Activated CD4-positive, alpha-beta T cell treated with anti-CD3 and anti-CD28 coated beads for 36 hours (primary cell): ENCODE measurements at regions of chr17 and their contacts with region 1.

Region 1: GRCh38 chr17:75632863-75633485 is at the start of gene SMIM5:
- DNase-seq: peak; percentile 92
- ATAC-seq: peak; percentile 93
- H3K4me3 Mint-ChIP-seq: no peak within 1 kb of the TSS
- H3K27ac Mint-ChIP-seq: no peak within 1 kb of the TSS
- H3K4me1 Mint-ChIP-seq: peaks cover 5% of the 10 kb centered on the region
- H3K27me3 Mint-ChIP-seq: no peaks in the 10 kb centered on the region
- total RNA-seq, gene SMIM5: 0.12 to 0.14 TPM

Region 2: DNA sequence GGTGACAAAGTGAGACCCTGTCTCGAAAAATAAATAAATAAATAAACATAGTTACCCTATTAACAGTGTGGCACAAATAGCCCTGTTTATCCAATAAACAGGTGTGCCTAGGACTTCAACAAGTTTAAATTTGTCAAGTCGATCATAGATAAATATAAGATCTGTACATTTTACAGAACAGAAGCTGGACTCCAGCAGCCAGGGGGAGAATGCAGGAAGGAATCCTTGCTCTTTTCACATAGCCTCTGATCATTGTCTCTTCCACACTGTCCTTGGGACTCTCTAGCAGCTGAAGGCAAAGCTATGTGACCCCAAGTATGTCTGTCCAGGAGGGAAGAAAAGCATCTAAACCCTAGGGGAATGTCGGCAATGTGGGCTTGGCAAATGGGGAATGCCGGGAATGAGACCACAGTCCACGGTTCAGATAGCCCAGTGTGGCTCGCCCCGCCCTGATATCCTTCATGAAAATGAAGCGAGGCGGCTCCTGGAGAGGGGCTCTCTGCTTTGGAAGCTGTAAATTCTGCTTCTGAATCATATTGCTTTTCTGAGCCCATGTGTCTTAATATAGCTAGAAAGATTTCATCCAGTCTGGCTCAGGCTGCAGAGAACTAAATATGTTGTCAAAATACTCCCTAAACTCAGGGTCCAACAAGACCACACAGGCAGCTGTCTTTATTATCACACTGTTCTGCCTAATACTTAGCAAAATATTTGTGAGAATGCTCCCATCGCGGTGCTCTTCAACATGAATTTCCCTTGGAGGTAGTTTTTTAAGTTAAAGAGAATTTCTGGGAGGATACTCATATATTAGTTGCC is 202.6 kb before region 1 on chr17:
- CTCF ChIA-PET with region 1: interaction called, 6 read pairs
- POLR2A ChIA-PET with region 1: no interaction called
- intact Hi-C with region 1: loop called in 1 of 2 experiments (anchors 1 kb)
- DNase-seq: no peak
- ATAC-seq: no peak
- H3K4me3 Mint-ChIP-seq: no peak overlapping the region
- H3K27ac Mint-ChIP-seq: no peak overlapping the region
- H3K4me1 Mint-ChIP-seq: peaks cover 16% of the 10 kb centered on the region
- H3K27me3 Mint-ChIP-seq: peaks cover 5% of the 10 kb centered on the region

Region 3: GRCh38 chr17:75601057-75602051 is 31.6 kb before region 1 on chr17:
- CTCF ChIA-PET with region 1: interaction called, 14 read pairs
- POLR2A ChIA-PET with region 1: no interaction called
- intact Hi-C with region 1: no loop called
- DNase-seq: peak; percentile 83
- ATAC-seq: peak; percentile 90
- H3K4me3 Mint-ChIP-seq: no peak overlapping the region
- H3K27ac Mint-ChIP-seq: no peak overlapping the region
- H3K4me1 Mint-ChIP-seq: no peaks in the 10 kb centered on the region
- H3K27me3 Mint-ChIP-seq: no peaks in the 10 kb centered on the region

Region 4: DNA sequence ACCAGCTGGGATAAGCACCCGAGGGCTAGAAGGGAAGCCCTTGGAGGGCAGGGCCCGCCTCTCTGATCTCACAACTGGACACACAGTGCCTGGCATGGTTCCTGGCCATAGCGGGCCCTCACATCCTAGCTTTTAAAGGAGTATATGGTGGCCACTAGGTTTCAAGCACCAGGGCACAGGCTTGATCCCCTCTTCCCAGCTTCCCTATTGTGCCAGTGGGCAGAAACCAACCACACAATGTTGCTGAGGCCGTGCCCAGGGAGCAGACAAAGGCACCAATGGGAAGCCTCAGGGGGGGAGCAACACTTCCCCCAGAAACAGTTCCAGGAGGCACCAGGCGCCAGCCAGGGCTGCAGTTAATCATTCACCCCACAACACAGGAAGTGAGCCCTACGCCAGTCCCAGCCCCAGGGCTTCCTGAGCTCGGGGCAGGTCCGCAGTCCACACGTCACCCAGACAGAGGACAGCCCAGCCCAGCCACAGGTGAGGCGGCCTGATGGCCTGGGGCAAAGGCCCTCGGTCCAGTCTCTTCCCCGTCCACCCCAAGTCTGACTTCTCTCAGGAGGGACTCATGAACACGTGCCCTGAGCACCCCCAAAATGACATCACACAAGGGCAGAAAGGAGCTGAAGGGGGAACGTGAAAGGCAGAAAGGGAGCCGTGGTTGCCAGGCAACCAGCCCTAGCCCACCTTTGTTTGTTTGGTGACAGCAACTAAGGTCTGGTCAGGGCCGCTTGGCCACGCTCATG is 13.1 kb after region 1 on chr17:
- CTCF ChIA-PET with region 1: interaction called, 45 read pairs
- POLR2A ChIA-PET with region 1: no interaction called
- intact Hi-C with region 1: no loop called
- DNase-seq: no peak
- ATAC-seq: no peak
- H3K4me3 Mint-ChIP-seq: no peak overlapping the region
- H3K27ac Mint-ChIP-seq: no peak overlapping the region
- H3K4me1 Mint-ChIP-seq: no peaks in the 10 kb centered on the region
- H3K27me3 Mint-ChIP-seq: no peaks in the 10 kb centered on the region

Region 5: DNA sequence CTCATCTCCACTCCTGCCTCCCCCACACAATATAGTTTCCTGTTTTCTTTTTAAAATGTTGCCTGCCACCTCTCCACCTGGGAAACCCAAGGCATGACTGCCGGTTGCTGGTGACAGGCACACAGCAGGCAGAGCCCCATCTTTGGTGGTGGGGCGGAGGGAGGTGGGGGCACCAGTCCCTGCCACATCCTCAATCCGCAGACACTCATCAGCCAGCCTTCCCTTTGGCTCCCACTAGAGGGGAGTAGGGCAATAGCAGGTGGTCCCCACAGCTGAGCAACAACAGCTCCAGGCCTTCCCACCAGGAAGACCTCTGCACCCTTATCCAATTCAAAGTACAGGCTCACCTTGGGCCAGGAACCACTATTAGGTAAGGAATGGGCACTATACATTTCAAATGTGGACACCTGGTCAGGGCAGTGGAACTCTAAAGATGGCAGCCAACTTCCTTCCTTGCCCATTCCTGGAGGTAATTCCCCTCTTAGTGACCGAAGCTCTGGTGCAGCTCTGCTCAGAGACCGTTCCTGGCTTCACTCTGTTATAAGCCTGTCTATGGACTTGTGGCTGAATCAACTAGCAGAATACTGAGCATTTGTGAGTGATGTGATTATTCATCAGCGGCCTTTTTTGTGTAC is 20.1 kb after region 1 on chr17:
- CTCF ChIA-PET with region 1: interaction called, 45 read pairs
- POLR2A ChIA-PET with region 1: no interaction called
- intact Hi-C with region 1: no loop called
- DNase-seq: peak; percentile 42
- ATAC-seq: peak; percentile 75
- H3K4me3 Mint-ChIP-seq: no peak overlapping the region
- H3K27ac Mint-ChIP-seq: no peak overlapping the region
- H3K4me1 Mint-ChIP-seq: no peaks in the 10 kb centered on the region
- H3K27me3 Mint-ChIP-seq: no peaks in the 10 kb centered on the region

Region 6: GRCh38 chr17:75658237-75658636 is 25.3 kb after region 1 on chr17:
- CTCF ChIA-PET with region 1: interaction called, 23 read pairs
- POLR2A ChIA-PET with region 1: no interaction called
- intact Hi-C with region 1: no loop called
- DNase-seq: no peak
- ATAC-seq: no peak
- H3K4me3 Mint-ChIP-seq: no peak overlapping the region
- H3K27ac Mint-ChIP-seq: no peak overlapping the region
- H3K4me1 Mint-ChIP-seq: no peaks in the 10 kb centered on the region
- H3K27me3 Mint-ChIP-seq: no peaks in the 10 kb centered on the region

Region 7: GRCh38 chr17:75667021-75667790 is 34.2 kb after region 1 on chr17 and contains the starts of genes RECQL5 and SAP30BP:
- CTCF ChIA-PET with region 1: interaction called, 10 read pairs
- POLR2A ChIA-PET with region 1: no interaction called
- intact Hi-C with region 1: no loop called
- DNase-seq: peak; percentile 99
- ATAC-seq: peak; percentile 100
- H3K4me3 Mint-ChIP-seq: no peak within 1 kb of the TSS
- H3K27ac Mint-ChIP-seq: no peak within 1 kb of the TSS
- H3K4me1 Mint-ChIP-seq: peaks cover 34% of the 10 kb centered on the region
- H3K27me3 Mint-ChIP-seq: no peaks in the 10 kb centered on the region
- total RNA-seq, gene RECQL5: 36.4 to 40.5 TPM
- total RNA-seq, gene SAP30BP: 87.8 to 100.0 TPM

Region 8: DNA sequence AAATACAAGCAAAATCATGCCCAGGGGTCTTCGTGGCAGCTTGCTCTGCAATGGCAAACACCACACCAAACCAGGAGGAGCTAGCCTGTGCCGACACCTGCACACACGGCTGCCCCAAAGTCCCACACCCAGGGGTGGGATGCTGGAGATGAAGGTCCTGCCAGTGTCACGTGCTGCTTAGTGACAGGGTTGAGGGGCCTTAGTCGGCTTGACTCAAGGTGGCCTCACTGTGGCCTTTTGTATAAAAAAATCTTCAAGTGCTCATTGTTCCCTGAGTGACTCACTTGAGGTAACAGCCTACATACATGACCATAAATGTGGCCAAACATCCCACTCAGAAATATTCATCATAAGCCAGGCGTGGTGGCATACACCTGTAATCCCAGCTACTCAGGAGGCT is 256.5 kb after region 1 on chr17:
- CTCF ChIA-PET with region 1: no interaction called
- POLR2A ChIA-PET with region 1: no interaction called
- intact Hi-C with region 1: no loop called
- DNase-seq: no peak
- ATAC-seq: peak; percentile 72
- H3K4me3 Mint-ChIP-seq: no peak overlapping the region
- H3K27ac Mint-ChIP-seq: no peak overlapping the region
- H3K4me1 Mint-ChIP-seq: peaks cover 7% of the 10 kb centered on the region
- H3K27me3 Mint-ChIP-seq: no peaks in the 10 kb centered on the region